Activated CD8-positive, alpha-beta T cell treated with anti-CD3 and anti-CD28 coated beads for 36 hours (primary cell): ENCODE measurements at regions of chr9 and their contacts with region 1.

Region 1: GRCh38 chr9:16266648-16267276 is 603.7 kb downstream of the BNC2 start:
- DNase-seq: peak; percentile 33
- ATAC-seq: no peak
- H3K4me3 Mint-ChIP-seq: no peak overlapping the region
- H3K27ac Mint-ChIP-seq: no peak overlapping the region
- H3K4me1 Mint-ChIP-seq: peaks cover 5% of the 10 kb centered on the region
- H3K27me3 Mint-ChIP-seq: no peaks in the 10 kb centered on the region
- CTCF ChIP-seq: peak; percentile 59

Region 2: DNA sequence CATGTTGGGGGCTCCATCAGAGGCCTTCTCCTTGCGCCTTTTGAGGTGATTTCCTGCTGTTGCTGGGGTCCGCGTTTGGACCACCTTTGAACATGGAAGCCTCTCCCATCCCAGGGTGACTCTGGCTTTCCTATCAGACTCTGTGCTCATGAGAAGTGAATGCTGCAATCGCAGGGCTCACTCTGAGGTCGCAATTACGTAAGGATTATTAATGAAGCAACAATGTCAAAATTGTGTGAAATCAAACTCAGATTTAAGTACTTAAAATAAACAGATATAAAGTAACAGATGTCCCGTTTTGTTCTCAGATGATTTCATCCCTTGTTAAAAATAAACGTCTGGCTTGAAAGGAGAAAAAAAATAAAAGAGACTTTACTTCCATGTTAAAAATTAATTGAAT is 30.5 kb before region 1 on chr9:
- CTCF ChIA-PET with region 1: no interaction called
- POLR2A ChIA-PET with region 1: no interaction called
- intact Hi-C with region 1: no loop called
- DNase-seq: no peak
- ATAC-seq: no peak
- H3K4me3 Mint-ChIP-seq: no peak overlapping the region
- H3K27ac Mint-ChIP-seq: no peak overlapping the region
- H3K4me1 Mint-ChIP-seq: no peaks in the 10 kb centered on the region
- H3K27me3 Mint-ChIP-seq: no peaks in the 10 kb centered on the region
- CTCF ChIP-seq: no peak

Region 3: GRCh38 chr9:16315720-16316119 is 49.0 kb after region 1 on chr9:
- CTCF ChIA-PET with region 1: no interaction called
- POLR2A ChIA-PET with region 1: no interaction called
- intact Hi-C with region 1: loop called (anchors 5 kb)
- DNase-seq: no peak
- ATAC-seq: no peak
- H3K4me3 Mint-ChIP-seq: no peak overlapping the region
- H3K27ac Mint-ChIP-seq: no peak overlapping the region
- H3K4me1 Mint-ChIP-seq: no peaks in the 10 kb centered on the region
- H3K27me3 Mint-ChIP-seq: no peaks in the 10 kb centered on the region
- CTCF ChIP-seq: no peak

Region 4: GRCh38 chr9:16344343-16344742 is 77.6 kb after region 1 on chr9:
- CTCF ChIA-PET with region 1: no interaction called
- POLR2A ChIA-PET with region 1: no interaction called
- intact Hi-C with region 1: no loop called
- DNase-seq: no peak
- ATAC-seq: no peak
- H3K4me3 Mint-ChIP-seq: no peak overlapping the region
- H3K27ac Mint-ChIP-seq: no peak overlapping the region
- H3K4me1 Mint-ChIP-seq: no peaks in the 10 kb centered on the region
- H3K27me3 Mint-ChIP-seq: no peaks in the 10 kb centered on the region
- CTCF ChIP-seq: no peak